KBM-7 (cell line): ENCODE measurements at regions of chr2 and their contacts with region 1.

Region 1: DNA sequence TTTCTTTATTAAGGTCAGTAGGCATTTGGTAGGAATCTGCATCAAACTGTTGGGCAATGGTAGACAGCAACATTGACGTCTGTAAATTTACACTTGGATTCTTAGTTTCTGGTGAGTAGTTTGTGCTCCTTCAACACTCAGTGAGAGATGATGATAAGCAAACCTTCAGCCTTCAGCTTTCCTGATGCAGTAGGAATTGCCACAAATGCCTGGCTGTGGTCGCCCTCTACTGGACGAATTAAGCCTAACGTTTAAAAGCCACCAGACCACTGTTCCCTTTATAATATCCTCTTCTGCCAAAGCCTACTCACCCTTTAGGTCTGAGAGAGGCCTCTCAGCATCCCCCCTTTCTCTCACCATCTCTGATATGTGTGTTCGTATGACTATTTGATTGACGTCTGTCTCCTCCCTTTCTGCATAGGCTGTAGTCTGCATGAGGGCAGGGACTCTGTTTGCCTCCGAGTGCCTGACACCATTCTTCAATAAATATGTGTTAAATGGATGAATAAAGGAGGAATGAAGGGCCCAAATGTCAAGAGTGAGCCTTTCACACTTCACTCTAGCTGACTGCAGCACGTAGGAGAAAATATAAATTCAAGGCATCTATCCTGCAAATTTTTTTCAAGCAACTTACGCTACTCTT is 47.0 kb upstream of the PLEKHM3 start:
- DNase-seq: peak; percentile 84

Region 2: GRCh38 chr2:207625018-207625907 is 447.1 kb before region 1 on chr2 and contains the start of gene METTL21A:
- in situ Hi-C with region 1: loop called (anchors 25 kb)
- DNase-seq: peak; percentile 90